SK-N-SH (cell line): ENCODE measurements at regions of chr5 and their contacts with region 1.

Region 1: DNA sequence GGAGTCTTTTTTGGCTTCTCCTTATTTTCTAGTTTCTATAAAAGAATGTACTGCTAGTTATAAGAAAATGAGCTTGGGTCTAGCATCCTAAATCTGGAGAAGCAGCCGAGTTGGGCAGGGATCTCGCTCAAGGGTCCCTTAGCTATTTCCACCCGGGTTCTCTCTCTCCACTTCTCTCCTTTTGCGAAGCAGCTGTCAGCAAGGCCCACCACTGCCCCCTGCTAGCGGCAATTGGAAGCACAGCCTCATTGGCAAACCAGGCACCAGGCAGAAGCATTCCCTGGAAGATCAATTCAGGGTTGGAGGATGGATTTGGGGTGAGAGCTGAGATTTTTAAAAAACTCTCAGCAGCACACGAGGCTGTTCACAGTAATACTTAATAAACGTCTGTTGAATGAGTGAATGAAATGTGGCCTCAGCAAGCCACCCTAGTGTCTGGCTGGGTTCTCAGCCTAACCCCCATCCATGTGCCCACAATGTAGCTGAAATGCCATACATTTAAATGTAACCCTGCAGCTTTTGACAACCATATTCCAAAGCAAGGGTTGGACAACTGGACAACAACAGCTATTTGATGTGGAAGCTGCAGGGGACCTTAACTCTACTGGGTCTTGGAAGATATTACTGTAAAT is 34.6 kb upstream of the TNIP1 start:
- DNase-seq: peak; percentile 83
- H3K4me3 ChIP-seq: no peak overlapping the region
- H3K27ac ChIP-seq: no peak overlapping the region
- H3K4me1 ChIP-seq: no peaks in the 10 kb centered on the region
- H3K27me3 ChIP-seq: no peaks in the 10 kb centered on the region
- CTCF ChIP-seq: peak; percentile 97
- EP300 ChIP-seq: no peak
- RAD21 ChIP-seq: peak; percentile 92

Region 2: DNA sequence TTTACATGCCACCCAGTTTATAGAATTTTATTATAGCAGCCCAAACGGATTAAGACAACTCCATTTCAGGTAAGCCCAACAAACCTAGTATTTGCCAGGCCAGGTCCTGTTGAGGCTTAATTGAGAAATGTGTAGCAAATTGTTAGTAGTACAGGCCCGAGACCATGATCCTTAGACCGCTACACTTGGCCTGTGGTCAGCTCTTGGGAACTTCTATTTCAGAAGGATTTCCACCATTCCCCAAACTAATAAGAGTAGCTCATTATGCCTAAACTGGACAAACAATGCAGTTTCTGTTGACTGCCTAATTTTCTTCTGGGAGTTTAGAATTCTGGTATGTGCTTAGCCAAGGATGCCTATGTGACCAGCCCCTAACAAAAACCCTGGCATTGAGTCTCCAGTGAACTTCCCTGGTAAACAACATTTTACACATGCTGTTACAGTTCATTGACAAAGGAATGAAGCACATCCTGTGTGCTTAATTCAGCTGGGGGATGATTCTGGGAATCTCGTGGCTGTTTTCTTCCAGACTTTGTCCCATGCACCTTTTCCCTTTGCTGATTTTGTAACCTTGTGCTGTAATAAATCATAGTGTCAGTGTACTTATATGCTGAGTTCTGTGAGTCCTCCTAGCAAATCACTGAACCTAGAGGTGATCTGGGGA is 100.6 kb before region 1 on chr5:
- CTCF ChIA-PET with region 1: interaction called, 10 read pairs
- POLR2A ChIA-PET with region 1: interaction called, 5 read pairs
- DNase-seq: no peak
- H3K4me3 ChIP-seq: no peak overlapping the region
- H3K27ac ChIP-seq: no peak overlapping the region
- H3K4me1 ChIP-seq: peaks cover 0 to under 1% of the 10 kb centered on the region in 2 experiments; a peak in 1 of 4 replicates
- H3K27me3 ChIP-seq: no peaks in the 10 kb centered on the region
- CTCF ChIP-seq: no peak
- EP300 ChIP-seq: no peak
- RAD21 ChIP-seq: no peak

Region 3: GRCh38 chr5:151063142-151063949 is 52.0 kb before region 1 on chr5:
- CTCF ChIA-PET with region 1: interaction called, 441 read pairs
- POLR2A ChIA-PET with region 1: no interaction called
- DNase-seq: no peak
- H3K4me3 ChIP-seq: no peak overlapping the region
- H3K27ac ChIP-seq: peak overlapping the region in 1 of 2 experiments; percentile 71; a peak in 3 of 4 replicates
- H3K4me1 ChIP-seq: peaks cover 10 to 16% of the 10 kb centered on the region in 2 experiments; a peak in 3 of 4 replicates
- H3K27me3 ChIP-seq: no peaks in the 10 kb centered on the region
- CTCF ChIP-seq: no peak
- EP300 ChIP-seq: peak in 1 of 2 experiments; percentile 39; a peak in 1 of 4 replicates
- RAD21 ChIP-seq: no peak

Region 4: GRCh38 chr5:151086905-151087360 is 28.5 kb before region 1 on chr5:
- CTCF ChIA-PET with region 1: interaction called, 23 read pairs
- POLR2A ChIA-PET with region 1: no interaction called
- DNase-seq: no peak
- H3K4me3 ChIP-seq: no peak overlapping the region
- H3K27ac ChIP-seq: no peak overlapping the region
- H3K4me1 ChIP-seq: peaks cover 4% of the 10 kb centered on the region in 2 experiments; a peak in 3 of 4 replicates
- H3K27me3 ChIP-seq: no peaks in the 10 kb centered on the region
- CTCF ChIP-seq: no peak
- EP300 ChIP-seq: no peak
- RAD21 ChIP-seq: no peak

Region 5: GRCh38 chr5:151126199-151126645 is 10.8 kb after region 1 on chr5:
- CTCF ChIA-PET with region 1: interaction called, 116 read pairs
- POLR2A ChIA-PET with region 1: interaction called, 5 read pairs
- DNase-seq: peak; percentile 75
- H3K4me3 ChIP-seq: peak overlapping the region in 1 of 2 experiments; percentile 32; a peak in 1 of 4 replicates
- H3K27ac ChIP-seq: no peak overlapping the region
- H3K4me1 ChIP-seq: no peaks in the 10 kb centered on the region; a peak in 1 of 4 replicates
- H3K27me3 ChIP-seq: no peaks in the 10 kb centered on the region
- CTCF ChIP-seq: peak; percentile 81
- EP300 ChIP-seq: no peak
- RAD21 ChIP-seq: peak; percentile 79

Region 6: GRCh38 chr5:151157426-151158286 is 42.3 kb after region 1 on chr5 and contains the start of gene ANXA6:
- CTCF ChIA-PET with region 1: interaction called, 540 read pairs
- POLR2A ChIA-PET with region 1: no interaction called
- DNase-seq: peak; percentile 91
- H3K4me3 ChIP-seq: peak within 1 kb of the TSS; percentile 82 to 96
- H3K27ac ChIP-seq: peak within 1 kb of the TSS in 1 of 2 experiments; percentile 73; a peak in 1 of 4 replicates
- H3K4me1 ChIP-seq: peaks cover 18 to 31% of the 10 kb centered on the region in 2 experiments; a peak in 2 of 4 replicates
- H3K27me3 ChIP-seq: no peaks in the 10 kb centered on the region
- CTCF ChIP-seq: no peak
- EP300 ChIP-seq: no peak
- RAD21 ChIP-seq: no peak
- polyA plus RNA-seq, gene ANXA6: 87.5 and 101 TPM in 2 replicates